ENCODE measurements at regions of chr11 and their contacts with region 1.

Region 1: GRCh38 chr11:111246956-111247355 is 1.4 kb downstream of the POU2AF2 start:
- DNase-seq: no peak
- ATAC-seq: no peak
- H3K4me3 ChIP-seq: no peak overlapping the region
- H3K27ac ChIP-seq: no peak overlapping the region
- H3K4me1 ChIP-seq: no peaks in the 10 kb centered on the region
- H3K27me3 ChIP-seq: peaks cover 27% of the 10 kb centered on the region
- CTCF ChIP-seq: no peak

Region 2: GRCh38 chr11:111259896-111260295 is 12.9 kb after region 1 on chr11:
- CTCF ChIA-PET with region 1: no interaction called
- POLR2A ChIA-PET with region 1: interaction called, 15 read pairs
- in situ Hi-C with region 1: no loop called
- intact Hi-C with region 1: no loop called
- DNase-seq: no peak
- ATAC-seq: no peak
- H3K4me3 ChIP-seq: no peak overlapping the region
- H3K27ac ChIP-seq: no peak overlapping the region
- H3K4me1 ChIP-seq: no peaks in the 10 kb centered on the region
- H3K27me3 ChIP-seq: peaks cover 34% of the 10 kb centered on the region
- CTCF ChIP-seq: no peak

Region 3: DNA sequence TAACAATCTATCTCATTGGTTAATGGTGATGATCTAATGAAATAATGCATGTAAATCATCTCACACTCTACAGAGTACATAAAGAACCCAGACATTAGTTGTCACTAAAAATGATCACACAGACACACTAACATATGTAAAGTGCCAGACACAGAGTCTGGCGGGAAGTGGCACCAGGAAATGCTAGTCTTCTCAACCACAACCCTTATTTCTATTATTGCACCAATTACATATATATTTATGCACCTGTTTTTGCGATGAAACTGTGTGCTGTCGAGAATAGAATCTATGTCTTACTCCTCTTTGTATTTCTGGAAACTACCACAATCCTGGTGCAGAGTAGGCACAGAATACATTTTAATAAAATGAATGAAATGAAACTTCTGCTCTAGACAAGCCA is 25.5 kb after region 1 on chr11:
- CTCF ChIA-PET with region 1: no interaction called
- POLR2A ChIA-PET with region 1: no interaction called
- in situ Hi-C with region 1: no loop called
- intact Hi-C with region 1: no loop called
- DNase-seq: no peak
- ATAC-seq: no peak
- H3K4me3 ChIP-seq: no peak overlapping the region
- H3K27ac ChIP-seq: no peak overlapping the region
- H3K4me1 ChIP-seq: no peaks in the 10 kb centered on the region
- H3K27me3 ChIP-seq: peaks cover 21% of the 10 kb centered on the region
- CTCF ChIP-seq: no peak

Region 4: GRCh38 chr11:111344032-111344431 is 97.1 kb after region 1 on chr11:
- CTCF ChIA-PET with region 1: no interaction called
- POLR2A ChIA-PET with region 1: no interaction called
- in situ Hi-C with region 1: no loop called
- intact Hi-C with region 1: no loop called
- DNase-seq: no peak
- ATAC-seq: no peak
- H3K4me3 ChIP-seq: no peak overlapping the region
- H3K27ac ChIP-seq: no peak overlapping the region
- H3K4me1 ChIP-seq: no peaks in the 10 kb centered on the region
- H3K27me3 ChIP-seq: no peaks in the 10 kb centered on the region; the same call in none of the 2 replicates
- CTCF ChIP-seq: no peak

Measured in Panc1 (cell line).